ENCODE measurements at regions of chr2 and their contacts with region 1.

Region 1: DNA sequence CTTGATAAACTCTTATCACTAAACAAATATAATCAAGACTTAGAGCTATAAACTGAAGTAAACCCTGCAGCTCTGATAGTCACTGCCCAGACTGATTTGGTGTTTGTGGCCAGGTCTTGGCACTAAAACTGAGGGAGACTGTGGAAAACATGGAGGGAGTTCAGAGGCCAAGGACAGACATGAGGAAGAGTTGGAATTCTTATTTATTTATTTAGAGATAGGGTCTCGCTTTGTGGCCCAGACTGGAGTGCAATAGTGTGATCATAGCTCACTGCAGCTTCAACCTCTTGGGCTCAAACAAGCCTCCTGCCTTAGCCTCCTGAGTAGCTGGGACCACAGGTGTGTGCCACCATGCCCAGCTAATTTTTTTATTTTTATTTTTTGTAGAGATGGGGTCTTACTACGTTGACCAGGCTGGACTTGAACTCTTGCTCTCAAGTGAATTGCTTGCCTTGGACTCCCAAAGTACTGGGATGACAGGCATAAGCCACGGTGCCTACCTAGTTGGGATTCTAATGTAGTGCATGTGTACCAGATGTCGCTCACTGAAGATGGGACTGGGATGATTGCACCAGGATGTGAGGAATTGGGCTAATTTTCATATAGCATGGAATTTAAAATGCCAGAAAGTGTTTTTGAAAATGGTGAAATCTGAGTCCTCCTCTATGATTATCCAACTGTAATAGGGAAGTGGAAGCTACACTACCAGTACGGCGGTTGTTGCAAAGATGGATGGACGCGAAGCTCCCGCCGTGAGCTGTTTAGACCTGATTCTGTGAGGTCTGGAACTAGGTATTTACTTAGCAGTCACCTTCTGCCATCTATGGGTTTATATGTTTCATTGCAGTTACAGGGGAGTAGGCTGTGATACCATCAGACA is 52.7 kb upstream of the CTLA4 start:
- DNase-seq: peak; percentile 73
- ATAC-seq: peak; percentile 83
- H3K4me3 Mint-ChIP-seq: peak overlapping the region; percentile 34
- H3K27ac Mint-ChIP-seq: peak overlapping the region; percentile 51
- H3K4me1 Mint-ChIP-seq: peaks cover 59% of the 10 kb centered on the region
- H3K27me3 Mint-ChIP-seq: peaks cover 2% of the 10 kb centered on the region
- CTCF ChIP-seq: peak; percentile 72

Region 2: GRCh38 chr2:203383038-203383437 is 431.9 kb before region 1 on chr2:
- CTCF ChIA-PET with region 1: no interaction called
- POLR2A ChIA-PET with region 1: no interaction called
- intact Hi-C with region 1: no loop called
- DNase-seq: no peak
- ATAC-seq: no peak
- H3K4me3 Mint-ChIP-seq: no peak overlapping the region
- H3K27ac Mint-ChIP-seq: no peak overlapping the region
- H3K4me1 Mint-ChIP-seq: no peaks in the 10 kb centered on the region
- H3K27me3 Mint-ChIP-seq: no peaks in the 10 kb centered on the region
- CTCF ChIP-seq: no peak

Region 3: GRCh38 chr2:203591642-203592041 is 223.3 kb before region 1 on chr2:
- CTCF ChIA-PET with region 1: no interaction called
- POLR2A ChIA-PET with region 1: no interaction called
- intact Hi-C with region 1: no loop called
- DNase-seq: no peak
- ATAC-seq: peak; percentile 27
- H3K4me3 Mint-ChIP-seq: no peak overlapping the region
- H3K27ac Mint-ChIP-seq: no peak overlapping the region
- H3K4me1 Mint-ChIP-seq: peaks cover 7% of the 10 kb centered on the region
- H3K27me3 Mint-ChIP-seq: no peaks in the 10 kb centered on the region
- CTCF ChIP-seq: no peak

Region 4: GRCh38 chr2:203650860-203651613 is 163.9 kb before region 1 on chr2:
- CTCF ChIA-PET with region 1: interaction called, 11 read pairs
- POLR2A ChIA-PET with region 1: no interaction called
- intact Hi-C with region 1: no loop called
- DNase-seq: no peak
- ATAC-seq: peak; percentile 84
- H3K4me3 Mint-ChIP-seq: no peak overlapping the region
- H3K27ac Mint-ChIP-seq: no peak overlapping the region
- H3K4me1 Mint-ChIP-seq: peaks cover 18% of the 10 kb centered on the region
- H3K27me3 Mint-ChIP-seq: no peaks in the 10 kb centered on the region
- CTCF ChIP-seq: peak; percentile 39

Region 5: GRCh38 chr2:203669820-203670219 is 145.1 kb before region 1 on chr2:
- CTCF ChIA-PET with region 1: no interaction called
- POLR2A ChIA-PET with region 1: no interaction called
- intact Hi-C with region 1: no loop called
- DNase-seq: no peak
- ATAC-seq: no peak
- H3K4me3 Mint-ChIP-seq: no peak overlapping the region
- H3K27ac Mint-ChIP-seq: peak overlapping the region; percentile 62
- H3K4me1 Mint-ChIP-seq: peaks cover 28% of the 10 kb centered on the region
- H3K27me3 Mint-ChIP-seq: no peaks in the 10 kb centered on the region
- CTCF ChIP-seq: no peak

Region 6: GRCh38 chr2:203730076-203730729 is 84.7 kb before region 1 on chr2:
- CTCF ChIA-PET with region 1: interaction called, 15 read pairs
- POLR2A ChIA-PET with region 1: interaction called, 12 read pairs
- intact Hi-C with region 1: no loop called
- DNase-seq: no peak
- ATAC-seq: peak; percentile 63
- H3K4me3 Mint-ChIP-seq: peak overlapping the region; percentile 49
- H3K27ac Mint-ChIP-seq: peak overlapping the region; percentile 99
- H3K4me1 Mint-ChIP-seq: peaks cover 89% of the 10 kb centered on the region
- H3K27me3 Mint-ChIP-seq: no peaks in the 10 kb centered on the region
- CTCF ChIP-seq: no peak

Region 7: GRCh38 chr2:203782262-203782976 is 32.5 kb before region 1 on chr2:
- CTCF ChIA-PET with region 1: interaction called, 62 read pairs
- POLR2A ChIA-PET with region 1: interaction called, 4 read pairs
- intact Hi-C with region 1: no loop called
- DNase-seq: peak; percentile 83
- ATAC-seq: peak; percentile 96
- H3K4me3 Mint-ChIP-seq: no peak overlapping the region
- H3K27ac Mint-ChIP-seq: peak overlapping the region; percentile 82
- H3K4me1 Mint-ChIP-seq: peaks cover 49% of the 10 kb centered on the region
- H3K27me3 Mint-ChIP-seq: no peaks in the 10 kb centered on the region
- CTCF ChIP-seq: peak; percentile 77

Region 8: GRCh38 chr2:203871371-203871983 is 56.6 kb after region 1 on chr2:
- CTCF ChIA-PET with region 1: interaction called, 24 read pairs
- POLR2A ChIA-PET with region 1: interaction called, 5 read pairs
- intact Hi-C with region 1: loop called (anchors 5 kb)
- DNase-seq: peak; percentile 72
- ATAC-seq: peak; percentile 69
- H3K4me3 Mint-ChIP-seq: peak overlapping the region; percentile 81
- H3K27ac Mint-ChIP-seq: peak overlapping the region; percentile 97
- H3K4me1 Mint-ChIP-seq: peaks cover 78% of the 10 kb centered on the region
- H3K27me3 Mint-ChIP-seq: no peaks in the 10 kb centered on the region
- CTCF ChIP-seq: no peak

Region 9: DNA sequence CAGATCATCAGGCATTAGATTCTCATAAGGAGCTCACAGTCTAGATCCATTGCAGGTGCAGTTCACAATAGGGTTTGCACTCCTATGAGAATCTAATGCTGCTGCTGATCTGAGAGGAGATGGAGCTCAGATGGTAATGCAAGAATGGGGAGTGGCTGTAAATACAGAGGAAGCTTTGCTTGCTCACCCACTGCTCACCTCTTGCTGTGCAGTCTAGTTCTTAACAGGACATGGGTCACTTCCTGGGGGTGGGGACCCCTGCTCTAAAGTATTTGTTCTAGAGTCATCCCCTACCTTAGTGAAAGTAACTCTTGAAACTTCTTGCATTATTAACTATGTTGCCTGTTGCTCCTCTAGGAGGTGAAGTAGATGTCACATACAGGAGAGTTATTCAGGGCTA is 559.0 kb after region 1 on chr2:
- CTCF ChIA-PET with region 1: no interaction called
- POLR2A ChIA-PET with region 1: no interaction called
- intact Hi-C with region 1: no loop called
- DNase-seq: no peak
- ATAC-seq: no peak
- H3K4me3 Mint-ChIP-seq: no peak overlapping the region
- H3K27ac Mint-ChIP-seq: no peak overlapping the region
- H3K4me1 Mint-ChIP-seq: no peaks in the 10 kb centered on the region
- H3K27me3 Mint-ChIP-seq: peaks cover 8% of the 10 kb centered on the region
- CTCF ChIP-seq: no peak